ENCODE measurements at regions of chr21 and their contacts with region 1.

Region 1: GRCh38 chr21:46532080-46532479 is 72.8 kb downstream of the S100B start:
- DNase-seq: peak in 6 of 9 experiments; percentile 42 to 77 (median 48)
- ATAC-seq: peak; percentile 86
- H3K4me3 ChIP-seq: peak overlapping the region in 1 of 2 experiments; percentile 18
- H3K4me3 Mint-ChIP-seq: peak overlapping the region; percentile 49
- H3K27ac ChIP-seq: peak overlapping the region; percentile 0 to 21
- H3K27ac Mint-ChIP-seq: peak overlapping the region; percentile 92
- H3K4me1 ChIP-seq: peaks cover 69% of the 10 kb centered on the region
- H3K4me1 Mint-ChIP-seq: peaks cover 41% of the 10 kb centered on the region
- H3K27me3 ChIP-seq: no peaks in the 10 kb centered on the region
- H3K27me3 Mint-ChIP-seq: no peaks in the 10 kb centered on the region
- CTCF ChIP-seq: no peak

Region 2: DNA sequence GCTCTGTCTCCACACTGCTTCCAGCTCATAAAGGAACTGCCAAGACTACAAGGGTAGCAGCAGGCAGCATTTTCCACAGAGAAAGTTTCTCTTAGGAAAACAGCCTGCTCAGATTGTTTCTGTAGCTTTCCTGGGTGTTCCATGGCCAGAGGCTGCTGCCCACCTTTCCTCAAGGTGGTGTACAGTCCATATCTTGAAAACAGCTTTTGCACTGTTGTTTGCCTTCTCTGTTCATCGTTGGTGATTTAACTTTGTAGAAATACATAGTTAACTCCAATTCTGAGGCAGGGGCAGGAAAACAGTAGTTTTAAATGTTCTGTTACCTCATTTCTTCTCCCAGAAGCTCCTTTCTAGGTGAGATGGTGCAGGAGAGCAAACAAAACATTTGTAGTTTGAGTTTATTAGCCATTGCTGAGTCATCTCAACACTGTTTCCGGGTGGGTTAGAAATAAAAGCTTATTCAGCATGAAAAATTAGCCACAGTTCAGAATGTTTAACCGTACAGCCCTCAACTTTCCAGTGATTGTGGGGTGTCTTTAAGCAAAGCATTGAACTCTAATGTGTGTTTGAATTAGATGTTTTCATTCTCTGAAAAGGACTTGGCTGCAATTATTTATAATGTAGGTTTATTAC is 31.7 kb before region 1 on chr21:
- CTCF ChIA-PET with region 1: interaction called, 6 read pairs
- POLR2A ChIA-PET with region 1: interaction called, 11 read pairs
- intact Hi-C with region 1: no loop called
- DNase-seq: peak in 2 of 9 experiments; percentile 16 to 37
- ATAC-seq: peak; percentile 51
- H3K4me3 ChIP-seq: no peak overlapping the region
- H3K4me3 Mint-ChIP-seq: no peak overlapping the region
- H3K27ac ChIP-seq: peak overlapping the region in 1 of 2 experiments; percentile 42
- H3K27ac Mint-ChIP-seq: peak overlapping the region; percentile 77
- H3K4me1 ChIP-seq: peaks cover 20% of the 10 kb centered on the region
- H3K4me1 Mint-ChIP-seq: peaks cover 34% of the 10 kb centered on the region
- H3K27me3 ChIP-seq: no peaks in the 10 kb centered on the region
- H3K27me3 Mint-ChIP-seq: no peaks in the 10 kb centered on the region
- CTCF ChIP-seq: no peak

Region 3: DNA sequence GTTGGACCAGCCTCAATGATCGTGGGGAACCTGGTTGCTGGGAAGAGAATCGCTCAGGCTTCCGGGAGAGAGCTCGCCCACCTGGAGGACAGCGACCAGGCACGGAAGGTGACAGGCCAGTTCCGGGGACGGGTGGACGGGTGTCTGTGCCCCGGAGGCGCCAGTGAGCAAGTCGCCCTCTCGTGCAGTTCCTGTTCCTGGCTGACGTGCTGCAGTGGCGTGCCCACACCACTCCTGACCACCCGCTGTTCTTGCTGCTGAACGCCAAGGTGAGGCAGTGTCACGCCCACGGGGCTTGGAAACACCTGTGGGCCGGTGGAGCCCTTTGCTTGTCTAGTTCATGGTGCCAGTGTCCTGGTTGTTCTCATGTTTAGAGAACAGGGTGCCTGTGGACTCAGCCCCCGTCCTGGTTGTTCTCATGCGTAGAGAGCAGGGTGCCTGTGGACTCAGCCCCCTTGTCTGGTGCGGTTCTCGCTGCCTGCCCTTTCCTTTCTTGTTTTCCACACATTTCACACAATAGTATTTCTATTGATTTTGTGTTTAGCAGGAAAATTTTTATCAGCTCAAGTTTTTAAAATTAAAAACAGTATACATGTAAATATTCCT is 19.7 kb after region 1 on chr21:
- CTCF ChIA-PET with region 1: interaction called, 17 read pairs
- POLR2A ChIA-PET with region 1: interaction called, 14 read pairs
- intact Hi-C with region 1: no loop called
- DNase-seq: peak in 8 of 9 experiments; percentile 34 to 81 (median 55)
- ATAC-seq: peak; percentile 14
- H3K4me3 ChIP-seq: peak overlapping the region in 1 of 2 experiments; percentile 14
- H3K4me3 Mint-ChIP-seq: peak overlapping the region; percentile 66
- H3K27ac ChIP-seq: peak overlapping the region; percentile 59 to 84
- H3K27ac Mint-ChIP-seq: peak overlapping the region; percentile 99
- H3K4me1 ChIP-seq: peaks cover 84% of the 10 kb centered on the region
- H3K4me1 Mint-ChIP-seq: peaks cover 81% of the 10 kb centered on the region
- H3K27me3 ChIP-seq: no peaks in the 10 kb centered on the region
- H3K27me3 Mint-ChIP-seq: no peaks in the 10 kb centered on the region
- CTCF ChIP-seq: no peak

Region 4: DNA sequence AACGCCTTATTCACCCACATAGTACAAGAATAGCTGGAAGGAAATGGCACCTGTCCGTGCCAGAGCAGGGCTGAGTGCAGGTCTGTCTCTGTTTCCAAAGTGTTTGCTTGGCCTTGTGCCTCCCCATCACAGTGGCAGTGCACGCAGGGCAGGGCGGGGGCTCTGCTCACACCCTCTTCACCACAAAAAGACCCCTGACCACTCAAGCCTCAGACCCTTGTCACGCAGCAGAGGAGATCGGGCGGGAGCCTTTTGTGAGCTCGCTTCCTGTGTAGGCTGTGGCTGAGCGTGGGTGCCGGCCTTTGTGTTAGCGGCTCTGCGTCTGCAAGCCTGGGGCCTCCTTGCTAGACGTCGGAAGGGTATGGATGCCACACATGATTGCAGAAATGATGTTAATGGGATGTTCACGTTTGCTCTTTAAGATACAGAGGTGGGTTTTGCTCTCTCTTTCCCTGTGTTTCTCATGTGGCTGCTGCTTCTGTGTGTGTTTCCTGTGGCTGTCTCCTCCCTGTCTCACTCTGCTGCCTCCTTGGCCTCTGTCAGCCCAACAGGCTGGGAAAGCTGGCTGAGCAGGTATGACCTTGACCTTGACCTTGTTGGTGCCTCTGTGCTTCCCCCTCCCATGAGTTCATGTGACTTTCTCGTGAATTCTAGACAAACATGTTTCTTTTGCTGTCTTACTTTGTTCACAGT is 27.4 kb after region 1 on chr21:
- CTCF ChIA-PET with region 1: interaction called, 9 read pairs
- POLR2A ChIA-PET with region 1: interaction called, 17 read pairs
- intact Hi-C with region 1: no loop called
- DNase-seq: peak; percentile 31 to 88 (median 72)
- ATAC-seq: peak; percentile 77
- H3K4me3 ChIP-seq: peak overlapping the region; percentile 15 to 30
- H3K4me3 Mint-ChIP-seq: peak overlapping the region; percentile 73
- H3K27ac ChIP-seq: peak overlapping the region; percentile 67 to 75
- H3K27ac Mint-ChIP-seq: peak overlapping the region; percentile 97
- H3K4me1 ChIP-seq: peaks cover 95% of the 10 kb centered on the region
- H3K4me1 Mint-ChIP-seq: peaks cover 84% of the 10 kb centered on the region
- H3K27me3 ChIP-seq: no peaks in the 10 kb centered on the region
- H3K27me3 Mint-ChIP-seq: no peaks in the 10 kb centered on the region
- CTCF ChIP-seq: no peak

Region 5: DNA sequence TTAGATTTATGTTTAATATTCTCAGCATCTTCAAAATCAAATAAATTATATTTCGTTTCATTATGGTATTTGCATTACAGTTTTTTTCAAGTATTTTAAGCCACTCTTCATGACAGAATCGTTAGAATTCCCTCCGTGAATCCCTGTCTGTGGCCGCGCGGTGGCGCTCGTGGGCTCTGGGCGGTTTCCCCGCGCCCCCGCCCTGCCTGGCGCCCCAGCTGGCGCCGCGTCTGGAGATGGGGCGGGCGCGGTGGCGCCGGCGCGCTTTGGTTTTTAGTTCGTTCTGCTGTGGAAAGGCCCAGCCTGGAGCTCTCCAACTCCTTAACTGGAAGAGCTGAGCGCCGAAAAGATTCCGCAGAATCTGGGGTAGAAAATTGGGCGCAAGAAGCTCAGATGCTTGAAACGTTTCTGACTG is 129.1 kb after region 1 on chr21:
- CTCF ChIA-PET with region 1: no interaction called
- POLR2A ChIA-PET with region 1: no interaction called
- intact Hi-C with region 1: no loop called
- DNase-seq: peak in 6 of 9 experiments; percentile 17 to 80 (median 69)
- ATAC-seq: peak; percentile 78
- H3K4me3 ChIP-seq: peak overlapping the region in 1 of 2 experiments; percentile 20
- H3K4me3 Mint-ChIP-seq: peak overlapping the region; percentile 45
- H3K27ac ChIP-seq: no peak overlapping the region
- H3K27ac Mint-ChIP-seq: no peak overlapping the region
- H3K4me1 ChIP-seq: peaks cover 13% of the 10 kb centered on the region
- H3K4me1 Mint-ChIP-seq: peaks cover 40% of the 10 kb centered on the region
- H3K27me3 ChIP-seq: no peaks in the 10 kb centered on the region
- H3K27me3 Mint-ChIP-seq: no peaks in the 10 kb centered on the region
- CTCF ChIP-seq: no peak